Left cardiac atrium (tissue), 4 donors: ENCODE measurements at regions of chr17 and their contacts with region 1.

Region 1: GRCh38 chr17:47663912-47664625 is 14.3 kb downstream of the KPNB1 start:
- DNase-seq: no peak
- ATAC-seq: peak; percentile 65 to 79

Region 2: GRCh38 chr17:47253541-47254402 is 410.3 kb before region 1 on chr17 and contains the start of gene ITGB3:
- intact Hi-C with region 1: no loop called
- DNase-seq: peak; percentile 86
- ATAC-seq: peak; percentile 94 to 97
- total RNA-seq, gene ITGB3: 5.9 to 19.5 TPM

Region 3: GRCh38 chr17:47742319-47743181 is 78.5 kb after region 1 on chr17:
- intact Hi-C with region 1: loop called (anchors 10 kb)
- DNase-seq: no peak
- ATAC-seq: peak in 1 of 2 donors; percentile 48

Region 4: DNA sequence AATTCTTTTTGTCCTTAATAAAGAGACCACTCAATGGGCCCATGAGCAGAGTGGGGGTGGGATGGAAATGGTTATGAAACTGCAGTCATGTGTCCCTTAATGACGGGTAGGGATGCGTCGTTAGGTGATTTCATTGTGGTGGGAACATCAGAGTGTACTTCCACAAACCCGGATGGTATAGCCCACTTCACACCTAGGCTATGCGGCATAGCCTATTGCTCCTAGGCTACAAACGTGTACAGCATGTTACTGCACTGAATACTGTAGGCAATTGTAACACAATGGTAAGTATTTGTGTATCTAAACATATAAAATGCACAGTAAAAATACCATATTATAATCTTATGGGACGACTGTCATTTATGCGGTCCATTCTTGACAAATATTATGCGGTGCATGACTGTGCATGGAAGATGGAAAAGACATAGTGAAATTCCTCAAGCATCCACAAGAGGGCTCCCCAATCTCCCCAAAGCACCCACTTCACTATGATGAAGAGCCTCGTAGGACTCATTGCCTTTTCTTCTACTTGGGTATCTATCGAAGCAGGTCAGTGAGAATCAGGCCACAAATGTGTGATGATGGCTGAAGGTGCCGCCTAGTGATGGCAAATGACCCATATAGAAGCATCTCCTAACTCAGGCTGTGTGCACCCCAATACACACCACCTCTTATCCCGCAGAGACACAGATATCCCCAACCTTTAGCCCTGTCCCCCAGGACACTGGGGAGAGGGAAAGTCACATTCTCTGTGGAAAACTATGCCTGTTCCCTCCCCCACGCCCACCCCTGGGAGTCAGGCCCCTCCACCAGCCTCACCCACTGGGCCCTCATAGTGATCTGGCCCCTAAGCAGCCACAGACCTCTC is 112.5 kb after region 1 on chr17:
- intact Hi-C with region 1: no loop called
- DNase-seq: no peak
- ATAC-seq: peak; percentile 53 to 66

Region 5: DNA sequence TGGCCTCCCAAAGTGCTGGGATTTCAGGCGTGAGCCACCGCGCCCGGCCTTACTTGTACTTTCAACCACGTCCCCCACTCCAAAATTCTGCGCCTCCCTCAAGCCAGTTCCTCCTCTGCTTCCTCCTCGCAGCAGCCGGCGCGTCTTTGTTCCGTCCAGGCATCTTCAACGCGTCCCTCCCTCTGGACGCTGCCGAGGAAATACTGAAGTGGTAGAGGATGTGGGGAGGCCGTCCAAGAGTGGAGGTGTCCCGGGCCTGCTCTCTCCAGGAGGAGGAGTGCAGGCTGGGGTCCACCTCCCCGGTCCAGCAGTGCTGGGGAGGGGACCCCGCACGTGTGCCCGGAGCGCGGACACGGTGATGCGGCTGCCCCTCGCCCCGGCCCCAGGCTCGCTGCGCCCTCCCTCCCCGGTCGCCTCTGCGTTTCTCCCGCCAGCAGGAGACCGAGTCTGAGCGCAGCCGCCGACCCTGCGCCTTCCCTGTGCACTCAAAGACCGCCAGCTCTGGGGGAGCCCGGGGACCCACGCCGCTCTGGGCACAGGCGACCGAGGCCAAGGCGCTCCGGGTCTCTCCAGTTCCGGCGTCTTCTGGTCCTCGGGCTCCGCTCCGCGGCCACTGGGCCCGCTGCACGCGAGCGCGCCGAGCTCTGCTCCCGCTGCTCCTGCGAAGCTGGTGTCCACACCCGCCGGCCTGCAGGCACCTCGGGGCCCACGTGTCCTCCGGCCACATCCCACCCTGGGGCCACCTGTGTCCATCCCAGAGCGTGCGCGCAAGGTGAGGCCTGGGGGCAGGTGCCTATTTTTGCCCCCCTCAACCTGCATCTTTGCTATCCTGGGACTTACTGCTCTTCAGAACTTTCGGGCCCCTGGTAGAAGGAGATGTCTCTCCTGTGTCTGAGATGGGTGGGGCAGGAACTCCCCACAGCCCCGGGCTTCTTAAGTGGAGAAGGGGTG is 125.8 kb after region 1 on chr17:
- intact Hi-C with region 1: loop called in 1 of 2 experiments (anchors 10 kb)
- DNase-seq: peak; percentile 55
- ATAC-seq: peak; percentile 94 to 95

Region 6: DNA sequence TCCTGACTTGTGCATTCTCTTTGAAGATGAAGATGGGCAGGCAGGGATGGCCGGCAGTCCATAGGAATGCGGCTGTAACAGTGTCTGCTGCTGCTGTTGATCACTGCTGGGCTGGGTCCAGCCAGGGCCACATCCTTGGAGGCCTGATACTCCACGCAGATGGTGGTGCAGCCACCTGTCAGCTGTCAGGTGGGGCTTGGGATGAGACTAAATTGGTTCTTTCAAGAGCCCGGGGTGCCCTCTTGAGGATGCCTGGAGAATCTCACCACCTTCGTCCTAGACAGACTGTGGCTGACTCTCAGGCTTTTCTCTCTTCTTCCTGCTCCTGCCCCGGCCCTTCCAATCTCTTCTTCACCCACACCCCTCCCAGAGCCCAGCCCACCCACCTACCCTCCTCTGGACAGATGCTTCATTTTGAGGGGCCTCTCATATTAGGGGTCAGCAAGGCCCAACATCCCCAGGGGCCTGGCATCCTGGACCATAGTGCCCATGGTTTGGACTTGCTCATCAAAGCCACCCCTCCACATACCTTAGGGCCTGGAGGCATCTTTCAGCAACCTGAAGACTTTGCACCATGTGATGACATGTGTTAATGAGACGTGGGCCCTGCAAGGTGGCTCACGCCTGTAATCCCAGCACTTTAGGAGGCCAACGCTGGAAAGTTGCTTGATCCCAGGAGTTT is 138.4 kb after region 1 on chr17:
- intact Hi-C with region 1: loop called (anchors 10 kb)
- DNase-seq: no peak
- ATAC-seq: peak; percentile 46 to 70